Activated T-helper 2 cell treated with anti-CD3 and anti-CD28 coated beads, Interferon-gamma antibody, Interleukin-2, Interleukin-4, amounts not matched to agents 10 μg/mL and 5 μg/mL and 100 μg/mL, durations not matched to agents 14 hours and 24 hours and 36 hours (primary cell): ENCODE measurements at regions of chr6 and their contacts with region 1.

Region 1: DNA sequence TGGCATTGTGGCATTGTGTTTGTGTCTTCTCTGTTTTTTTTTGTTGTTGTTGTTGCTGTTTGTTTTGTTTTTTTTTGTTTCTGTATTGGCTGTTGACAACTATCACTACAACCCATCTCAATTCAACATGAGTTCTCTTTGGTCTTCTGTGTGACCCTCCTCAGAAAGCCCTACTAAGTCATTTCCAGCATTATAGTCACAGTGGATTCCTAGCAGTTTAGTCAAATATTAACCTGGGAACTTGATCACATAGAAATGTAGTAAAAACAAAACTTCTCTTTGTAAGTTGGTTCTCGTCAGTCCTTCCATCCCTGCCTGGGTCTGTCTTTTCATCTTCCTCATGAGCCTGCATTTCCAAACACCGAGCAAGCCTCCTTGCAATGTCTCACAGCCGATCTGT is 16.8 kb downstream of the SLC17A2 start:
- DNase-seq: no peak
- H3K4me3 Mint-ChIP-seq: no peak overlapping the region
- H3K27ac Mint-ChIP-seq: peak overlapping the region; percentile 77
- H3K4me1 Mint-ChIP-seq: peaks cover 40% of the 10 kb centered on the region
- H3K27me3 Mint-ChIP-seq: no peaks in the 10 kb centered on the region

Region 2: GRCh38 chr6:25237579-25237978 is 676.2 kb before region 1 on chr6:
- intact Hi-C with region 1: no loop called
- DNase-seq: no peak
- H3K4me3 Mint-ChIP-seq: no peak overlapping the region
- H3K27ac Mint-ChIP-seq: no peak overlapping the region
- H3K4me1 Mint-ChIP-seq: peaks cover 7% of the 10 kb centered on the region
- H3K27me3 Mint-ChIP-seq: peaks cover 7% of the 10 kb centered on the region

Region 3: GRCh38 chr6:25490018-25490801 is 423.5 kb before region 1 on chr6:
- intact Hi-C with region 1: no loop called
- DNase-seq: peak; percentile 52
- H3K4me3 Mint-ChIP-seq: no peak overlapping the region
- H3K27ac Mint-ChIP-seq: no peak overlapping the region
- H3K4me1 Mint-ChIP-seq: no peaks in the 10 kb centered on the region
- H3K27me3 Mint-ChIP-seq: no peaks in the 10 kb centered on the region

Region 4: GRCh38 chr6:25874822-25875562 is 38.7 kb before region 1 on chr6:
- intact Hi-C with region 1: loop called (anchors 5 kb)
- DNase-seq: no peak
- H3K4me3 Mint-ChIP-seq: peak overlapping the region; percentile 14
- H3K27ac Mint-ChIP-seq: peak overlapping the region; percentile 30
- H3K4me1 Mint-ChIP-seq: peaks cover 52% of the 10 kb centered on the region
- H3K27me3 Mint-ChIP-seq: no peaks in the 10 kb centered on the region

Region 5: DNA sequence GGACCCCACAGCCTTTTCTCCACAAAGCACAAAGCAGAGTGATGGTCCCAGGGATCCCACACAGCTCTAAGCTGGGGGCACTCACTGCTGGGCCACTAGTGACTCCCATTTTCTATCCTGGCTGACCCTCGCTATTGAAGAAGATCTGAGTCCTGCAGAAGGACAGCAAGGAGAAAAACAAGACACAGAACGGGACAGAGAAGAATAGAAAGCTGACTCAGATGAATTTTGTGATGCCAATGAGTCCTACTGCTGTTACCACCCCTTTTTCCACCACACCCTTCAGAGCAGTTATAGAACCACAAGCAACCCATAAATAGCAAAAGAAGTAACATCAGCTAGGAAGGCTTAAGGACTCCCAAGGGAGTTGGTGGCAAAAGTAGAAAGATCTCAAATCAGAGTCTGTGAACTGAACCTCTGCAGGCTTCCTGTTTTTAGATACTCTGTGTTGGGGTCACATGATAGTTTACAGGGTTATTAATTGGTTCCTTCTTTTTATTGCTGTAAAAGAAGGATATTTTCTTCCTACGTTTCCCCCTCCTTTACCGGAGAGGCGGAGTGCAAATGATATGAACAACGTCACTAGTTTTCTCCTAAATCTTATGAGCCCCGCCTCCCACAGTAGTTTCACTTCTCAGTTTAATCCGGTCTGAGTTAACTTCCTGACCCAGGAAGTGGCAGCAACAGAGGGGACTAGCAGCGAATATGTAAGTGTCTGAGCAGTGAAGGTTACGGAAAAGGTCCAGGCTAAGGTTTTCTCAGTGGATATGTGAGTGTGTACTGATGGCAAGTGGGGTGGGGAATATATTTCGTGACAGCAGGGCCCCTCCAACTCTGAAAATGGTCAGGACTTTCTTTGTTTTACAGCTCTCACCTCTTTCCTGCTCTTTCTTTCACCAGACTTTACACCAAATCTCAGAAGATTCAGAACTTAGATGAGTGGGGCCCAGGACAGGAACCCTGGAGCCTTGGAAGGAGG is 48.7 kb after region 1 on chr6 and contains the start of gene TRIM38:
- intact Hi-C with region 1: loop called (anchors 1 kb)
- DNase-seq: peak; percentile 77
- H3K4me3 Mint-ChIP-seq: peak within 1 kb of the TSS; percentile 99
- H3K27ac Mint-ChIP-seq: peak within 1 kb of the TSS; percentile 98
- H3K4me1 Mint-ChIP-seq: peaks cover 59% of the 10 kb centered on the region
- H3K27me3 Mint-ChIP-seq: no peaks in the 10 kb centered on the region
- total RNA-seq, gene TRIM38: 29.2 and 29.5 TPM in 2 replicates

Region 6: GRCh38 chr6:26175428-26176181 is 261.9 kb after region 1 on chr6:
- intact Hi-C with region 1: no loop called
- DNase-seq: peak; percentile 52
- H3K4me3 Mint-ChIP-seq: peak overlapping the region; percentile 56
- H3K27ac Mint-ChIP-seq: peak overlapping the region; percentile 63
- H3K4me1 Mint-ChIP-seq: peaks cover 45% of the 10 kb centered on the region
- H3K27me3 Mint-ChIP-seq: no peaks in the 10 kb centered on the region

Region 7: DNA sequence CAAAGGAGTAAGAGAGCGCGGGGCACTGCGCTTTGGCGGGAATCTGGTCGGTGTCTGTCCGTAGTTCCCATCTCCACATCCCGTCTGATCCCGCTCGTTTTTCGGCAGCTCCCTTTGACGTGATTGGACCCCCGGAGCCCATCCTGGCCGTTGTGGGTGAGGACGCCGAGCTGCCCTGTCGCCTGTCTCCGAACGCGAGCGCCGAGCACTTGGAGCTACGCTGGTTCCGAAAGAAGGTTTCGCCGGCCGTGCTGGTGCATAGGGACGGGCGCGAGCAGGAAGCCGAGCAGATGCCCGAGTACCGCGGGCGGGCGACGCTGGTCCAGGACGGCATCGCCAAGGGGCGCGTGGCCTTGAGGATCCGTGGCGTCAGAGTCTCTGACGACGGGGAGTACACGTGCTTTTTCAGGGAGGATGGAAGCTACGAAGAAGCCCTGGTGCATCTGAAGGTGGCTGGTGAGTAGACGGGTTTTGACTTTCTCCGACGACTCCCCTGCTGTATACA is 587.8 kb after region 1 on chr6:
- intact Hi-C with region 1: no loop called
- DNase-seq: peak; percentile 18
- H3K4me3 Mint-ChIP-seq: peak overlapping the region; percentile 67
- H3K27ac Mint-ChIP-seq: no peak overlapping the region
- H3K4me1 Mint-ChIP-seq: peaks cover 21% of the 10 kb centered on the region
- H3K27me3 Mint-ChIP-seq: peaks cover 49% of the 10 kb centered on the region